Activated CD4-positive, alpha-beta memory T cell treated with anti-CD3 and anti-CD28 coated beads for 36 hours (primary cell): ENCODE measurements at regions of chr3 and their contacts with region 1.

Region 1: GRCh38 chr3:184513276-184514170 is 48.1 kb upstream of the EPHB3 start:
- DNase-seq: peak; percentile 88
- H3K4me3 Mint-ChIP-seq: peak overlapping the region; percentile 39
- H3K27ac Mint-ChIP-seq: no peak overlapping the region
- H3K4me1 Mint-ChIP-seq: peaks cover 8% of the 10 kb centered on the region
- H3K27me3 Mint-ChIP-seq: peaks cover 46% of the 10 kb centered on the region

Region 2: GRCh38 chr3:184248454-184249411 is 264.8 kb before region 1 on chr3 and contains the start of gene ALG3:
- CTCF ChIA-PET with region 1: no interaction called
- POLR2A ChIA-PET with region 1: no interaction called
- intact Hi-C with region 1: no loop called
- DNase-seq: peak; percentile 91
- H3K4me3 Mint-ChIP-seq: peak within 1 kb of the TSS; percentile 90
- H3K27ac Mint-ChIP-seq: peak within 1 kb of the TSS; percentile 96
- H3K4me1 Mint-ChIP-seq: peaks cover 8% of the 10 kb centered on the region
- H3K27me3 Mint-ChIP-seq: no peaks in the 10 kb centered on the region
- total RNA-seq, gene ALG3: 31.6 to 34.1 TPM

Region 3: GRCh38 chr3:184354121-184354728 is 159.3 kb before region 1 on chr3:
- CTCF ChIA-PET with region 1: interaction called, 17 read pairs
- POLR2A ChIA-PET with region 1: no interaction called
- intact Hi-C with region 1: no loop called
- DNase-seq: peak; percentile 74
- H3K4me3 Mint-ChIP-seq: no peak overlapping the region
- H3K27ac Mint-ChIP-seq: no peak overlapping the region
- H3K4me1 Mint-ChIP-seq: no peaks in the 10 kb centered on the region
- H3K27me3 Mint-ChIP-seq: no peaks in the 10 kb centered on the region

Region 4: DNA sequence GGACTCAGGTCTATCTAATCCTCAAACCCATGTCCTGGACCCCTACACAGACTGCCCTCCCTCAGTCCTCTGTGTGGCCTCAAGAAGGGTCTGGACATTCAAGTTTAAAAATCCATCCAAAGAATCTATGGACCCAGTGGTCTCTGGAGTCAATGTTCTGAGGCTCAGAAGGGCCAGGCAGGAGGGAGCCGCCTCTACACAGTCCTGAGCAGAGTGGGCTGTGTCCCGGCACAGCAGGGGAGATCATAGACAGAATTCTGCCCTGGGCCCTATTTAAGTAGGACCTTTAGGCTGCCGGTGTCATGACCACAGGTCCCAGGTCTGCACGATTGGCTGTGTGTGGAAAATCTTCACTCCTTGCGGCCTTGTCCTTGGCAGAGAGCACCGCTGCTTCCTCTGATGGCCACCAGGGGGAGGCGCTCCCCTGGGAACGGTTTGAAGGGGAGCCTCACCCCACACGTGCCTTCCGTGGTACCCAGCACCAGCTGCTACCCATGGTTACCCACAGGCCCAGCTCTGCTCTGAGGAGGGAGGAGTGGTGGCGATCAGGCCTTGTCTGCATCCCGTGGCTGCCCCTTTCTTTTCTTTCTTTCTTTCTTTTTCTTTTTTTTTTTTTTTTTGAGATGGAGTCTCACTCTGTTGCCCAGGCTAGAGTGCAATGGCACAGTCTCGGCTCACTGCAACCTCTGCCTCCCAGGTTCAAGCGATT is 95.8 kb before region 1 on chr3:
- CTCF ChIA-PET with region 1: interaction called, 76 read pairs
- POLR2A ChIA-PET with region 1: no interaction called
- intact Hi-C with region 1: loop called (anchors 5 kb)
- DNase-seq: peak; percentile 79
- H3K4me3 Mint-ChIP-seq: no peak overlapping the region
- H3K27ac Mint-ChIP-seq: no peak overlapping the region
- H3K4me1 Mint-ChIP-seq: no peaks in the 10 kb centered on the region
- H3K27me3 Mint-ChIP-seq: no peaks in the 10 kb centered on the region

Region 5: DNA sequence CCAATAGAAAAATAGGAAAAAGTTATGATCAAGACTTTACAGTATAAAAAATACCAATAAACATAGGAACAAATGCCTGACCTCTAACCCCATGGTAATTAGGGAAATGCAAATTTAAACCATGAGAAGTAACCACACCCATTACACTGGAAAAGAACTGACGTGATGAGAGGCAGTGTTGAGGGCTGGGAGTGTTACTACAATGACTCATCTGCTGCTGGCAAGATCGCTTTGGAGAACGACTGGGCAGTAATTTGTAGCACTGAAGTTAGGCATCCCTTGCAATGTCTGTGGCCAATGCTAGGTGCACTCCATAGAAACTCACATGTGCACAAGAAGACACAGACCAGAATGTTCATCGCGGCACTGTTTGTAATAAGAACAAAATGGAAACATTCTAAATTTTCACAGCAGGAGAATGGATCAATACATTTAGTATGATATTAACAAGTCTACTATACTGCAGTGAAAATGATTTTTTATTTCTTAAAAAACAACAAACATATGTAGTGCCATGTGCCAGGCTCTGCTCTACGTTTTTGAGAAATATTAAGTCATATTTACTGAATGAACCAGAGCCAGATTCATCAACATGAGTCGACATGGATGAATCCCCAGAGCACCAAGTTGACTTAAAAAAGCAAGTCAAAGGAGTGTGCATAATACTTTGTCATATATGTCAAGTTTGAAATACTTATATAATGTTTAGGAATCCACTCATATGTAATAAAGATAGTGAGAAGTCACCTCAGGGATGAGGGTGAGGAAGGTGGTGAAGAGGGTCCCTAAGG is 10.5 kb after region 1 on chr3:
- CTCF ChIA-PET with region 1: interaction called, 26 read pairs
- POLR2A ChIA-PET with region 1: interaction called, 3 read pairs
- intact Hi-C with region 1: no loop called
- DNase-seq: peak; percentile 59
- H3K4me3 Mint-ChIP-seq: no peak overlapping the region
- H3K27ac Mint-ChIP-seq: no peak overlapping the region
- H3K4me1 Mint-ChIP-seq: peaks cover 18% of the 10 kb centered on the region
- H3K27me3 Mint-ChIP-seq: peaks cover 24% of the 10 kb centered on the region